ENCODE measurements at regions of chr20 and their contacts with region 1.

Region 1: GRCh38 chr20:31661625-31662371 is 24.1 kb downstream of the COX4I2 start:
- DNase-seq: peak; percentile 83
- H3K4me3 ChIP-seq: peak overlapping the region; percentile 53
- H3K27ac ChIP-seq: peak overlapping the region; percentile 64
- H3K4me1 ChIP-seq: peaks cover 37% of the 10 kb centered on the region
- CTCF ChIP-seq: peak; percentile 74

Region 2: GRCh38 chr20:31425797-31426196 is 236.0 kb before region 1 on chr20:
- CTCF ChIA-PET with region 1: no interaction called
- POLR2A ChIA-PET with region 1: no interaction called
- intact Hi-C with region 1: no loop called
- DNase-seq: no peak
- H3K4me3 ChIP-seq: no peak overlapping the region
- H3K27ac ChIP-seq: no peak overlapping the region
- H3K4me1 ChIP-seq: no peaks in the 10 kb centered on the region
- CTCF ChIP-seq: no peak

Region 3: GRCh38 chr20:31603822-31604567 is 57.8 kb before region 1 on chr20:
- CTCF ChIA-PET with region 1: no interaction called
- POLR2A ChIA-PET with region 1: no interaction called
- intact Hi-C with region 1: no loop called
- DNase-seq: peak; percentile 88
- H3K4me3 ChIP-seq: peak overlapping the region; percentile 70
- H3K27ac ChIP-seq: no peak overlapping the region
- H3K4me1 ChIP-seq: peaks cover 20% of the 10 kb centered on the region
- CTCF ChIP-seq: no peak

Region 4: GRCh38 chr20:31691646-31692275 is 30.0 kb after region 1 on chr20:
- CTCF ChIA-PET with region 1: interaction called, 11 read pairs
- POLR2A ChIA-PET with region 1: interaction called, 13 read pairs
- intact Hi-C with region 1: no loop called
- DNase-seq: peak; percentile 77
- H3K4me3 ChIP-seq: peak overlapping the region; percentile 57
- H3K27ac ChIP-seq: peak overlapping the region; percentile 88
- H3K4me1 ChIP-seq: peaks cover 86% of the 10 kb centered on the region
- CTCF ChIP-seq: no peak

Region 5: GRCh38 chr20:31712564-31713311 is 50.9 kb after region 1 on chr20:
- CTCF ChIA-PET with region 1: interaction called, 11 read pairs
- POLR2A ChIA-PET with region 1: interaction called, 6 read pairs
- intact Hi-C with region 1: loop called (anchors 1 kb)
- DNase-seq: no peak
- H3K4me3 ChIP-seq: no peak overlapping the region
- H3K27ac ChIP-seq: peak overlapping the region; percentile 2
- H3K4me1 ChIP-seq: peaks cover 95% of the 10 kb centered on the region
- CTCF ChIP-seq: no peak

Measured in OCI-LY7 (cell line).